Activated CD8-positive, alpha-beta memory T cell treated with anti-CD3 and anti-CD28 coated beads, Interleukin-2, amount 10 ng/mL, durations not matched to agents 7 days and 5 days (primary cell): ENCODE measurements at regions of chr11 and their contacts with region 1.

Region 1: DNA sequence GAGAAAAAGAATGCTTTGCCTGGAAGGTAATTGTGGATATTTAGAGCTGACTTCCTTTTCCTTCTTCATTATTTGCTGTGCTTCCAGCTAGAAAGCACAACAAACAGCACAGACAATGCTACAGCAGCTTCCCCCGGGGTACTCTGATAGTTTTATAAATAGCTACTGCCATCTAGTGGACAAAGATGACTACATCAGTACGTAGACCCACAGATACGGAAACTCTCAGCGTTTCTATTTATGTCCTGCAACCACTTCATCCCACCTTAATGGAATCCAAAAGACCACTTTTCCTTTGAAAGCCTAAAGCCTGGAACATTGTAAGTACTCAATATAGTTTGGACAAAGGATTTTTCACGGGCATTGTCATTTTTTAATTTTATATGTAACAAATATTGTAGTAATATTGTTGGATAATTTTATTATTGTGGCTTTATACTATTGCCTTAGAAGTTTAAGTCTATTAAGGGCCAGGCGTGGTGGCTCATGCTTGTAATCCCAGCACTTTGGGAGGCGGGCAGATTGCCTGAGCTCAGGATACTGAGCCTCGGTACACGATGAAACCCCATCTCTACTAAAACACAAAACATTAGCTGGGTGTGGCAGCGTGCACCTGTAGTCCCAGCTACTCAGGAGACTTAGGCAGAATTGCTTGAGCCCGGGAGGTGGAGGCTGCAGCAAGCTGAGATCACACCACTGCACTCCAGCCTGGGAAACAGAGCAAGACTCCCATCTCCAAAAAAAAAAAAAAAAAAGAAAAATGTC is 7.5 kb downstream of the HSPA8 start:
- DNase-seq: no peak
- ATAC-seq: peak; percentile 48
- H3K4me3 Mint-ChIP-seq: no peak overlapping the region
- H3K27ac Mint-ChIP-seq: peak overlapping the region; percentile 100
- H3K4me1 Mint-ChIP-seq: peaks cover 49% of the 10 kb centered on the region
- H3K27me3 Mint-ChIP-seq: no peaks in the 10 kb centered on the region

Region 2: GRCh38 chr11:122863704-122864326 is 190.7 kb before region 1 on chr11:
- CTCF ChIA-PET with region 1: interaction called, 30 read pairs
- DNase-seq: no peak
- ATAC-seq: no peak
- H3K4me3 Mint-ChIP-seq: no peak overlapping the region
- H3K27ac Mint-ChIP-seq: no peak overlapping the region
- H3K4me1 Mint-ChIP-seq: no peaks in the 10 kb centered on the region
- H3K27me3 Mint-ChIP-seq: no peaks in the 10 kb centered on the region

Region 3: GRCh38 chr11:123069908-123070821 is 15.7 kb after region 1 on chr11:
- CTCF ChIA-PET with region 1: interaction called, 11 read pairs
- DNase-seq: no peak
- ATAC-seq: peak; percentile 72
- H3K4me3 Mint-ChIP-seq: peak overlapping the region; percentile 72
- H3K27ac Mint-ChIP-seq: peak overlapping the region; percentile 100
- H3K4me1 Mint-ChIP-seq: peaks cover 48% of the 10 kb centered on the region
- H3K27me3 Mint-ChIP-seq: no peaks in the 10 kb centered on the region

Region 4: DNA sequence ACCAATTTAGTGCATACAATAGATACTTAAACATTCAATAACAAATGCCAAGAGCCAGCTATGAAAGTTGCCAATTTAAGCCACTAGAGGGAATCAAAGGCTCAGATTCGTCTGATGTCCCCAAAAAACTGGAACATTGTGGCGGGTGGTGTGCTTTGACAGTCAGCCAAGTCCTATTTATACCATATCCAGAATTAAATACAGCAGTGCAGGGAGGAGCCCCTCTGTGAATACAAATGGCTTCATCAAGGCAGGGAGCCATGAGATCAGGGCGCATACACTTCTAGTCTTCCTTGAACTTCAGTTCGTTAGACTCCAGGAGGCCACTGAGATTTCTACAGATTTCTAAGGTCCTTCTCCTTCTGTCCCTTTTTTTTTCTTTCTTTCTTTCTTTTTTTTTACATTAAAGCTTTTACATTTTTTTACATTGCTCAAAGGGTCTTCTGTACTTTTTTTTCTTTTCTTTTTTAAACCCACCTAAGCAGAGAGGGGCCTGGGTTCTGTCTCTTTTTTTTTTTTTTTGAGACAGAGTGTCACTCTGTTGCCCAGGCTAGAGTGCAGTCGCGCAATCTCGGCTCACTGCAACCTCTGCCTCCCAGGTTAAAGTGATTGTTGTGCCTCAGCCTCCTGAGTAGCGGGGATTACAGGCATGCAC is 49.0 kb after region 1 on chr11:
- CTCF ChIA-PET with region 1: interaction called, 17 read pairs
- DNase-seq: peak; percentile 46
- ATAC-seq: peak; percentile 82
- H3K4me3 Mint-ChIP-seq: no peak overlapping the region
- H3K27ac Mint-ChIP-seq: no peak overlapping the region
- H3K4me1 Mint-ChIP-seq: peaks cover 4% of the 10 kb centered on the region
- H3K27me3 Mint-ChIP-seq: peaks cover 4% of the 10 kb centered on the region

Region 5: DNA sequence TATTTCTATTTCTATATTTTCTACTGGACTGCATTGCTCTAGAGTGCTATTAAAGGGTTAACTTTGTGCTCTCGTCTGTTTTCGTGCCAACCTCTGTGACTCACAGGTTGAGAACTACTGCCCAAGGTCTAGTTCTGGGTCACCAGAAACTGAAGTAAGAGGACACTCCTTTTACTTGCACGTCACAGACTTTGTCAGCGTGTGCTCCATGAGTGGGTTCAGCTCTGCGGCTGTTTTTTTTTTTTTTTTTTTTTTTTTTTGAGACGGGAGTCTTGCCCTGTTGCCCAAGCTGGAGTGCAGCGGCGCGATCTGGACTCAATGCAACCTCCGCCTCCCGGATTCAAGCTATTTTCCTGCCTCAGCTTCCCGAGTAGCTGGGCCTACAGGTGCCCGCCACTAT is 90.7 kb after region 1 on chr11:
- CTCF ChIA-PET with region 1: no interaction called
- DNase-seq: no peak
- ATAC-seq: no peak
- H3K4me3 Mint-ChIP-seq: no peak overlapping the region
- H3K27ac Mint-ChIP-seq: no peak overlapping the region
- H3K4me1 Mint-ChIP-seq: no peaks in the 10 kb centered on the region
- H3K27me3 Mint-ChIP-seq: peaks cover 2% of the 10 kb centered on the region

Region 6: DNA sequence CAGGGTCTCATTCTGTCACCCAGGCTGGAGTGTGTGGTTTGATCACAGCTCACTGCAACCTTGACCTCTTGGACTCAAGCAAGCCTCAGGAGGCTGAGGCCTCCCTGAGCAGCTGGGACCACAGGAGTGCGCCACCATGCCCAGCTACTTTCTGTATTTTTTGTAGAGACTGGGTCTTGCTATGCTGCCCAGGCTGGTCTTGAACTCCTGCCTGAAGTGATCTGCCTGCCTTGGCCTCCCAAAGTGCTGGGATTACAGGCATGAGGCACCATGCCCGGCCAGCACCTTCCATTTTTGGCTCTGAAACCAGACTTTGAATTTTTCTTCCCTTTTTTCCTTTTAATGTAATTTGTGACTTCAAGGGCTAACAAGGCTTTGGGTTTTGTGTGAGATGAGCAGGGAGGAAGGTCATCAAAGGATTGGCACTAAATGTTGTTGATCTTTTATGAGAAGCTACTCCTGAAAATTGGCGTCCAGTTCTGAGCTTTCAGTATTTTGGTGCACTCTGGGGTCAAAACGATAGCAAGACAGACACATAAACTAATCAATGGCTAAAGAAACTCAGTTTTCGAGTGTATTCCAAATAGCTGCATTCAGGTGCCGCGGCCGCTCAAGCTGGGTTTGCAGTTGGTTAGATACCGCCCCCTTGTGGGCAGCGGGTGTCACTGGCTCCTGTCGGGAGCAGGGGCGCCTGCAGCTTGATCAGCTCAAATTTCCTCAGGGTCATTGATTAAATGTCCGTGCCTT is 192.4 kb after region 1 on chr11:
- CTCF ChIA-PET with region 1: interaction called, 15 read pairs
- DNase-seq: peak; percentile 89
- ATAC-seq: peak; percentile 92
- H3K4me3 Mint-ChIP-seq: no peak overlapping the region
- H3K27ac Mint-ChIP-seq: peak overlapping the region; percentile 18
- H3K4me1 Mint-ChIP-seq: peaks cover 9% of the 10 kb centered on the region
- H3K27me3 Mint-ChIP-seq: peaks cover 35% of the 10 kb centered on the region